ENCODE measurements at regions of chr14 and their contacts with region 1.

Region 1: GRCh38 chr14:95442633-95443021 is 73.8 kb downstream of the SYNE3 start:
- DNase-seq: peak; percentile 79 to 81
- ATAC-seq: peak; percentile 93 to 97 (median 94)
- H3K4me3 ChIP-seq: no peak overlapping the region
- H3K27ac ChIP-seq: no peak overlapping the region
- H3K4me1 ChIP-seq: peaks cover 0 to 9% (median 0%) of the 10 kb centered on the region in 9 donors
- H3K27me3 ChIP-seq: no peaks in the 10 kb centered on the region
- CTCF ChIP-seq: peak; percentile 75 to 95 (median 88)

Region 2: GRCh38 chr14:95408731-95409476 is 33.7 kb before region 1 on chr14:
- intact Hi-C with region 1: no loop called
- DNase-seq: peak in 1 of 2 donors; percentile 29
- ATAC-seq: peak in 7 of 8 donors; percentile 24 to 75 (median 65)
- H3K4me3 ChIP-seq: no peak overlapping the region
- H3K27ac ChIP-seq: peak overlapping the region in 9 of 10 donors; percentile 56 to 78 (median 71)
- H3K4me1 ChIP-seq: peaks cover 6 to 40% (median 17%) of the 10 kb centered on the region in 9 donors
- H3K27me3 ChIP-seq: no peaks in the 10 kb centered on the region
- CTCF ChIP-seq: no peak

Region 3: DNA sequence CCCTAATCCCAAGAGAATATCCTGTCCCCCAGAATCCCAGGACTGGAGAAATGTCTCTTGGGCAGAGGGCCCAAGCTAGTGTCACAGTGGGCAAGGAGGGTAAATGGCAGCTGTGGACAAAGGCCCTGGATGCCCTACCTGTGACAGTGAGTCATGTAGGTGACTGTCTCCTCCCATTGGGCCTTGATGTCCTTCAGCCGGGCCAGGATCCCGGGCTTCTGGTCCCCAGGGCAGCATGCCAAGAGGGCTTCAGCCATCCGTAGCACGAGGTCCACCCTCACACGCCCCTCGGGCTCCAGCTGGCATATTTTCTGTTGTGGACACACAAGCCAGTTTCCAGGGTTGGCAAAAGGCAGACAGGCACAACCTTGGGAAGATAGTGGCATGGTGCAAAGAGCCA is 25.0 kb after region 1 on chr14:
- intact Hi-C with region 1: loop called in 1 of 10 experiments (anchors 2 kb)
- DNase-seq: no peak
- ATAC-seq: peak in 6 of 8 donors; percentile 7 to 49 (median 32)
- H3K4me3 ChIP-seq: no peak overlapping the region
- H3K27ac ChIP-seq: peak overlapping the region in 6 of 10 donors; percentile 2 to 52 (median 34)
- H3K4me1 ChIP-seq: peaks cover 13 to 73% (median 52%) of the 10 kb centered on the region in 9 donors
- H3K27me3 ChIP-seq: no peaks in the 10 kb centered on the region
- CTCF ChIP-seq: no peak

Region 4: DNA sequence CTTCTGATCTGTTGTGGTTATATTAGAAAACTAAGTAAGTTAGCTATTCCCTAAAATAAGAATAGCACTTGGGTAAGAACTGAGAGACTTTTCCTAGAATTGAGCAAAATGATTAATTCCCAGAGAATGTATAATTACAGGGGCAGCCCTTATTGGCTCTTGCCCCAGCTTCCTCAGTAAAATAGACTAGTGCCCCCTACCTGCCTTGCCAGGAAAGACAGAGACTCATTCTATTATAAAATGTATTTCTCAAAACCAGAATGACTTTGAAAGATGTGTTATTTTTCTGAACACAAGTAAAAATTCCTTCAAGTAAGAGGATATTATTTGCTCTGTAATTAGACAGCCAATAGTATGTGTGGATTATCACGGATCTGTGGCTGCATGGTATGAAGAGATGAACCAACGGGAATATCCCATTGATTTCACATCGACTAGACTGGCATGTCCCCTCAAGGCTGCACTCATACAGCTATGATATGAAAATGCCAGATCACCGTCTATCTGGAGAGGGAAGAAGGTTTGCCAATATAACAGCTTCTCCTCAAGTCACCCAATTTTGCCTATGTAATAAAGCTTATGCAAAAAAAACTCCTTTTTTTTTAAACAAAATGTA is 84.9 kb after region 1 on chr14:
- intact Hi-C with region 1: loop called (anchors 1 to 5 kb)
- DNase-seq: peak in 1 of 2 donors; percentile 70
- ATAC-seq: peak in 6 of 8 donors; percentile 52 to 73 (median 59)
- H3K4me3 ChIP-seq: no peak overlapping the region
- H3K27ac ChIP-seq: peak overlapping the region in 8 of 10 donors; percentile 40 to 75 (median 66)
- H3K4me1 ChIP-seq: peaks cover 19 to 69% (median 56%) of the 10 kb centered on the region in 9 donors
- H3K27me3 ChIP-seq: no peaks in the 10 kb centered on the region
- CTCF ChIP-seq: peak; percentile 66 to 88 (median 84)

Region 5: DNA sequence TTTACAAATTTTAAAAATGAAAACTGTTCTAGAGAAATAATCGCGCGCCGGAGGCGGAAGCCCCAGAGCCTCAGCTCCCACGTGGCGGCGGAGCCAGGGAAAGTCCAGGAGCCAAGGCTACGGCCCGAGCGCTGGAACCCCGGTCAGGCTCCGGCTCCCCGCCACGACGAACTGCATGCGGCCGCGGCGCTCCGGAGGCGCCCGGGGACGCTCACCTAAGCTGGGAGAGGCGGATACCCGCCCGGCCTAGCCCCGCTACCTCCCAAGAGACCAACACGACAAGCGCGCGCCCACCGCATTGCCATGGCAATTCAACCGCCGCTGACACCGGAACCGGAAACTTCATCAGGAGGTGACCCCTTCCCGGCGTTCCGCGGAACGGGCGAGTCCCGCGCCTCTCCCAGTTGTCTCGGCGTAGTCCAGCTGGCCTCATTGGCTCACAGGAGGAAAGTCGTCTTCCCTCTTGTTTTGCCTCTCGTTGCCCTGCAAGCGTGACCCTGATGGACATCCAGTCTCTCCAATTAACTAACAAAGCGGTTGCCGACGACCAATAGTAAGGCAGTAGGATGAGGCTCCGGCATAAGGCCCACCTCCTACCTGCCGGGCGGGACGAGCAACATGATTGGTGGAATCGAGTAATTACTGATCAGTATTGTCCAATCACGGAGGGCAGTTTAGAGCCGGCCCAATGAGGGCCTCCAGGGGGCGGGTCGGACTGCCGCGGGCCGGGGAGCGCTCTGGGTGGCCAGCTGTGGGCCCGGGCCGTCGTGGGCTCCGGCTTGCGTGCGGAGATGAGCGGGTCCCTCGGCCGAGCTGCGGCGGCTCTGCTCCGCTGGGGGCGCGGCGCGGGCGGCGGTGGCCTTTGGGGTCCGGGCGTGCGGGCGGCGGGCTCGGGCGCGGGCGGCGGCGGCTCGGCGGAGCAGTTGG is 91.9 kb after region 1 on chr14 and contains the start of gene GLRX5:
- intact Hi-C with region 1: loop called in 3 of 10 experiments (anchors 2 to 5 kb)
- DNase-seq: peak; percentile 95 to 100
- ATAC-seq: peak; percentile 95 to 98 (median 97)
- H3K4me3 ChIP-seq: peak within 1 kb of the TSS; percentile 79 to 100 (median 95)
- H3K27ac ChIP-seq: peak within 1 kb of the TSS; percentile 62 to 91 (median 86)
- H3K4me1 ChIP-seq: peaks cover 19 to 79% (median 70%) of the 10 kb centered on the region in 9 donors
- H3K27me3 ChIP-seq: no peaks in the 10 kb centered on the region
- CTCF ChIP-seq: peak in 4 of 9 donors; percentile 19 to 31 (median 22)
- total RNA-seq, gene GLRX5: 69.9 to 121 (median 91.8) TPM

Region 6: DNA sequence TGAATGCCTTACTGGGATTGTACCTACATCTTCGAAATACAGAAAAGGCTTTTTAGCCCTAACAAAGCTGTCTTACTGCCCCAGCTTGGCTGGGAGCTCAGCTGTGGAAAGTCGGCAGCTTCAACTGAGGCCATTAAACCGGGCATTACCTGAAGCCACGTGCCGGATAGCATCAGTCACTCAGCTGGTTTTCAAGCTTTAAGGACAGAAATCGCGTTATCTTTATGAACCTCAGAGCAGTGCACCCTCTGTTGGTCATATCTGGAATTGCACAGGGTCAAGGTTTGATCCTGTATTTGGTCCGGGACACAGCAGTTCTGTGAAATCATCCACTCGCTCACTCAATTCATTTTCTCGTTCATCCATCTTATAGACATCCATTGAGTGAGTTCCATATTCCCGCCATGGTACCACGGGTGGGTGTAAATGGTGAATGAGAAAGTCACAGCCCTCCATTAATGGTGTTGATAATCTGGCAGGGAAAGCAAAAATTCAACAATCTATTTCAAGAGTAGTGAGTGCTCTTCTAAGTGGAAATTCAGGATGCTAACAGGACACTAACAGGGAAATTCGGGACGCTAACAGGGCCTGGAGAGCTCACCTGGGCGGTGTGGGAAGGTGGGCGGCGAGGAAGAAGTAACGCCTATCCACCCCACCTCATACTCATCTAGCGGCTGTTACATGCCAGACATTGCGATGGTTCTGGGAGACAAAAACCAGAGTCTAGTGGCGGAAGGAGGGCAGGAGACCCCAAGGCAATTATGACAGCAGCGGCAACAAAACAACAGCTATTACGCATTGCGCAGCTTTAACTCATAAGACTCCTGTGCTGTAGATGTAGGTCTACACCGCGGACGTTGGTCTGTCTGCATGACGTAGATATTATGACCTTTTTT is 331.9 kb after region 1 on chr14:
- intact Hi-C with region 1: loop called in 3 of 10 experiments (anchors 10 kb)
- DNase-seq: peak in 1 of 2 donors; percentile 33
- ATAC-seq: no peak
- H3K4me3 ChIP-seq: no peak overlapping the region
- H3K27ac ChIP-seq: no peak overlapping the region
- H3K4me1 ChIP-seq: no peaks in the 10 kb centered on the region
- H3K27me3 ChIP-seq: peaks cover 0 to 24% (median 10%) of the 10 kb centered on the region in 7 donors
- CTCF ChIP-seq: peak; percentile 57 to 92 (median 85)